CD4-positive, alpha-beta T cell (primary cell): ENCODE measurements at regions of chr17 and their contacts with region 1.

Region 1: DNA sequence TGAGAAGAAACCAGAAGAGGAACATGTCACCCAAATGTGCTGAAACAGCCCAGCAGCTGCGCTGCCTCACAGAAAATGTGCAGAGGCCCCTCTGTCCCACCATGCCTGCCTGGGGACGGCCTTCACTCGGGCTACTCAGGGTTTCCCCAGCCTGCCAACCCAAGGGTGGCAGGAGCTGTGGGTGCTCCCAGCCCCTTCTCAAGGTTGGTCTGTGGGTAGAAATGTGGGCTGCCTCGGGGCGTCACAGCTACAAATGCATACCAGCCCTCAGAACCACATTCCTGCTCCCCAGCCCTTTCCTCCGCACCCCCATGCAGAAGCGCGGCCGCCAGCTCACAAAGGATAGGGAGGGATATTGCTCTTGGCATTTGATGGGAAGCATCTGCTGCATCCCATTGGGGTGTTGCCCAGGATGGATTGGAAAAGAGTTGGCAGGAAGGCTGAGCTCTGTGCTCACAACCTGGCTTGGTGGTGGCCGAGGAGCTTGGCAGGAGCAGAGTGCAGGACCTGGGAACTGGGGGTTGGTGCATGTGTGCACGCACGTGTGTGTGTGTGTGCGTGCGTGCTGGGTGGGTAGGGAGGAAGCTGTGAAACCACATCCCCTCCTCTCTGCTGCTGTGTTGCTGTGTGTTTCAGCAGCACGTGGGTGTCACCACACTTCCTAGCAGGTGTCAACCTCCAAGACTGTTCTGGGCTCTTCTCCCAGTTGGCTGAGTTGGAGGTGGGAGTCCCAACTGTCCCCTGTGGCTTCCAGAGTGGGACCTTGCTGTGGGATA is 304.4 kb downstream of the SEC14L1 start:
- DNase-seq: peak; percentile 72 to 97 (median 83)
- ATAC-seq: peak; percentile 68
- H3K4me3 ChIP-seq: peak overlapping the region; percentile 55
- H3K4me3 Mint-ChIP-seq: peak overlapping the region; percentile 89
- H3K27ac ChIP-seq: peak overlapping the region; percentile 73 to 98
- H3K27ac Mint-ChIP-seq: peak overlapping the region; percentile 93
- H3K4me1 ChIP-seq: peaks cover 100% of the 10 kb centered on the region
- H3K4me1 Mint-ChIP-seq: peaks cover 98% of the 10 kb centered on the region
- H3K27me3 ChIP-seq: no peaks in the 10 kb centered on the region
- H3K27me3 Mint-ChIP-seq: no peaks in the 10 kb centered on the region
- CTCF ChIP-seq: no peak

Region 2: DNA sequence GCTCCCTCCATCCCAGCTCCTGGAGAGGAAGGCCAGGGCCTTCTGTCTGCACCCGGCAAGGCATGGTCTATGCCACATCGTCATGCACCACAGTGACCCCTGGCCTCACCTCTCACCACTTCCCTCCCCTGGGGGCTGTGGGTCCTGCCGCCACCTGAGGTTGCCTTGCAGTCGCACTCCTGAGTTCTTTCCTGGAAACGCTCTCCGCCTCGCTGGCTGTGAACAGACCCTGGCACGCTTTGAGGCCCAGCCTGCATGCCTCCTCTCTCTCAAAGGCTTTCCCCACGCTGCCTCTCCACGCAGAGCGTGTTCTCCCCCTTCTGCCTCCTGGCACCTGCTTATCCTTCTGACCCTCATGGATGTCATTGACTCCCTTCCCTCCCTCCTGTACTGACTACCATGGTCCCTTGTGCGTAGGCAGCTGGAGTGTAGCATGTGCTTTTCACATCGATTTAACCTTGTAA is 259.0 kb before region 1 on chr17:
- CTCF ChIA-PET with region 1: no interaction called
- POLR2A ChIA-PET with region 1: no interaction called
- intact Hi-C with region 1: no loop called
- DNase-seq: peak in 2 of 14 experiments; percentile 1 to 21
- ATAC-seq: peak; percentile 17
- H3K4me3 ChIP-seq: no peak overlapping the region
- H3K4me3 Mint-ChIP-seq: no peak overlapping the region
- H3K27ac ChIP-seq: no peak overlapping the region
- H3K27ac Mint-ChIP-seq: no peak overlapping the region
- H3K4me1 ChIP-seq: peaks cover 56% of the 10 kb centered on the region
- H3K4me1 Mint-ChIP-seq: peaks cover 29% of the 10 kb centered on the region
- H3K27me3 ChIP-seq: no peaks in the 10 kb centered on the region
- H3K27me3 Mint-ChIP-seq: no peaks in the 10 kb centered on the region
- CTCF ChIP-seq: no peak

Region 3: DNA sequence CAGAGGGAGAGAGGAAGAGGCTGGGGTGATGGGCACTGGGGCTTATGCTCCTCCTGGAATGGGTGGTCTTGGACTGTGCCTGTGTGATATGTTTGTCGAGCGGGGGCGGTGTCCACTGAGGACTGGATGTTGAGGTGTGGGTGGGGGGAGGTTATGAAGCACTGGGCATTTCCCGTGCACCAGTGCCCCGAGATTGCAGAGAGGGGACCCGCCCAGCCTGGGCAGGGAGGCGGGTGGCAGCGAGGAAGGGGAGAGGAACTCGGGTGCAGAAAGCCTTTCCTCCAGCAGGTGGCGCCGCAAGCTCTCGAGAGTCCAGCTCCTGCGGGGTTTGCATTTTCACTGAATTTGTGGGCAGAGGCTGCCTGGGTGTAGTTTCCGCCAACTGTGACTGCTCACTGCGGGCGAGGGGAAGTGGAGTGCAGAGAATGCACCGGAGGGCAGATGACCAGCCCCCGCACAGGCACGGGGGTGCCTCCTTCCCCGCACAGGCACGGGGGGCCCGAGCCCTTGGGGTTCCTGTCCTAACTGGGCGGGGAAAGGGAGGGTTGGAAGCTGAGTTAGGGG is 113.8 kb before region 1 on chr17:
- CTCF ChIA-PET with region 1: interaction called, 12 read pairs
- POLR2A ChIA-PET with region 1: interaction called, 29 read pairs
- intact Hi-C with region 1: no loop called
- DNase-seq: peak; percentile 92 to 99 (median 98)
- ATAC-seq: peak; percentile 84
- H3K4me3 ChIP-seq: peak overlapping the region; percentile 51
- H3K4me3 Mint-ChIP-seq: peak overlapping the region; percentile 90
- H3K27ac ChIP-seq: peak overlapping the region; percentile 47 to 55
- H3K27ac Mint-ChIP-seq: peak overlapping the region; percentile 88
- H3K4me1 ChIP-seq: peaks cover 52% of the 10 kb centered on the region
- H3K4me1 Mint-ChIP-seq: peaks cover 59% of the 10 kb centered on the region
- H3K27me3 ChIP-seq: no peaks in the 10 kb centered on the region
- H3K27me3 Mint-ChIP-seq: no peaks in the 10 kb centered on the region
- CTCF ChIP-seq: peak; percentile 92

Region 4: DNA sequence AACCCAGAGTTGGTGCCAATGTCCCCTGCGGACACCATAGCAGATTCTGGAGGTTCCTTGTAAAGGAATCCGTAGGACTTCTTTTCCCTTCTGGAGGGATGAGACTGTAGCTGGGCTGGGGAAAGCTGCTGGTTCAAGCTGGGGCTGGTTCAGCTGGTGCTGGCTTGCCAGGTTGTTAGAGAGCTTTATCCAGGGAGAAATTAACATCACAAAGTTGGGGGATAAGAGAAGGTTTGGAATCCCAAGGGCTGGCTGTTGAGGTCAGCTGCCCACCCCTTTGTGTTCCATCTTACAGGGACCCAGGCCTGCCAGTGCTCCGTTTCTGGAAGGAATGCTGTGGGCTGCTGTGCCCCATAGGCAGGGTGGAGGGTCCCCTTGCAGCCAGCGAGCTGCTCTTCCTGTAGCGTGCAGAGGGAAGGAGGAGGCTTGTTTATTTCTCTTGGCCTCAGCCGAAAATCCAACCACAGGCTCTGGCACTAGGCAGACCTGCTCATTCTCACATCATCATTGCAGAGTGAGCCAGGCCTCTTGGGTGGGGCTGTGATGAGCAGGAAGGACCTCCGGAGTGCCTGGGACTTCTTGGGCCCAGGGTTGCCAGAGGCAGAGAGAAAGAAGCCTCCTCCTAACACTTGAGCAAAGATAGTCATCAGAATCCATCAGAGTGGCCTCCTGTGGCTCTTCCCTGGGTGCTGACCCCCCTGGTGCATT is 53.4 kb before region 1 on chr17:
- CTCF ChIA-PET with region 1: interaction called, 3 read pairs
- POLR2A ChIA-PET with region 1: interaction called, 14 read pairs
- intact Hi-C with region 1: no loop called
- DNase-seq: peak in 10 of 14 experiments; percentile 33 to 76 (median 53)
- ATAC-seq: peak; percentile 41
- H3K4me3 ChIP-seq: peak overlapping the region; percentile 19
- H3K4me3 Mint-ChIP-seq: peak overlapping the region; percentile 65
- H3K27ac ChIP-seq: peak overlapping the region; percentile 31
- H3K27ac Mint-ChIP-seq: peak overlapping the region; percentile 90
- H3K4me1 ChIP-seq: peaks cover 91% of the 10 kb centered on the region
- H3K4me1 Mint-ChIP-seq: peaks cover 88% of the 10 kb centered on the region
- H3K27me3 ChIP-seq: no peaks in the 10 kb centered on the region
- H3K27me3 Mint-ChIP-seq: no peaks in the 10 kb centered on the region
- CTCF ChIP-seq: no peak

Region 5: DNA sequence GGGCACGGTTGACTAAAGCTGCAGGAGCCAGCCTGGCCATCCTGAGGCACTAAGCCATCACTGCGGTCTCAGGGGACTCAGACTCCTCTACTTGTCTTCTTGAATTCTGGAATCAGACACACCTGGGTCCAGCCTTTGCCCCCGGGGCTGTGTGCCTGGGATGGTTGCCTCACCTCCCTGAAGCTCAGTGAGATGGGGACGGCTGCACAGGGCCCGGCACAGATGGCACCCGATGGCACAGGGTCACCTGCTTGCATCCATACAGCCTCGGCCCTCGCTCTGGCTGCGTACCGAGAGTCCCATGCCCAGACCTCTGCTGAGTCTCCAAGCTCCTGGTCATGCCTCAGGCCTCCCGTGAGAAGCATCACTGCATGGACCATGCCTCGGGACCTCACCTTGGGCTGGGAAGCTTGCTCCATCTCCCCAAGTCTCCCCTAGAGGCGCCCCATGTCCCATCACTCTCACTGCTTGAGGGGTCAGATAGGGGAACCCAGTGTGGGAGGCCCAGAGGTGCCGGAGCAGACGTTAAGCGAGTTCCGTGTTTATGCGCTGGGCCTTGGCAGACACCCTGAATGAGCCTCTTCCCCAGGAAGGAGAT is 11.9 kb after region 1 on chr17:
- CTCF ChIA-PET with region 1: interaction called, 17 read pairs
- POLR2A ChIA-PET with region 1: interaction called, 681 read pairs
- intact Hi-C with region 1: loop called in 1 of 2 experiments (anchors 1 kb)
- DNase-seq: peak in 4 of 14 experiments; percentile 47 to 68 (median 60)
- ATAC-seq: peak; percentile 7
- H3K4me3 ChIP-seq: peak overlapping the region; percentile 94
- H3K4me3 Mint-ChIP-seq: peak overlapping the region; percentile 98
- H3K27ac ChIP-seq: peak overlapping the region; percentile 83 to 90
- H3K27ac Mint-ChIP-seq: peak overlapping the region; percentile 93
- H3K4me1 ChIP-seq: peaks cover 93% of the 10 kb centered on the region
- H3K4me1 Mint-ChIP-seq: peaks cover 72% of the 10 kb centered on the region
- H3K27me3 ChIP-seq: no peaks in the 10 kb centered on the region
- H3K27me3 Mint-ChIP-seq: no peaks in the 10 kb centered on the region
- CTCF ChIP-seq: no peak

Region 6: DNA sequence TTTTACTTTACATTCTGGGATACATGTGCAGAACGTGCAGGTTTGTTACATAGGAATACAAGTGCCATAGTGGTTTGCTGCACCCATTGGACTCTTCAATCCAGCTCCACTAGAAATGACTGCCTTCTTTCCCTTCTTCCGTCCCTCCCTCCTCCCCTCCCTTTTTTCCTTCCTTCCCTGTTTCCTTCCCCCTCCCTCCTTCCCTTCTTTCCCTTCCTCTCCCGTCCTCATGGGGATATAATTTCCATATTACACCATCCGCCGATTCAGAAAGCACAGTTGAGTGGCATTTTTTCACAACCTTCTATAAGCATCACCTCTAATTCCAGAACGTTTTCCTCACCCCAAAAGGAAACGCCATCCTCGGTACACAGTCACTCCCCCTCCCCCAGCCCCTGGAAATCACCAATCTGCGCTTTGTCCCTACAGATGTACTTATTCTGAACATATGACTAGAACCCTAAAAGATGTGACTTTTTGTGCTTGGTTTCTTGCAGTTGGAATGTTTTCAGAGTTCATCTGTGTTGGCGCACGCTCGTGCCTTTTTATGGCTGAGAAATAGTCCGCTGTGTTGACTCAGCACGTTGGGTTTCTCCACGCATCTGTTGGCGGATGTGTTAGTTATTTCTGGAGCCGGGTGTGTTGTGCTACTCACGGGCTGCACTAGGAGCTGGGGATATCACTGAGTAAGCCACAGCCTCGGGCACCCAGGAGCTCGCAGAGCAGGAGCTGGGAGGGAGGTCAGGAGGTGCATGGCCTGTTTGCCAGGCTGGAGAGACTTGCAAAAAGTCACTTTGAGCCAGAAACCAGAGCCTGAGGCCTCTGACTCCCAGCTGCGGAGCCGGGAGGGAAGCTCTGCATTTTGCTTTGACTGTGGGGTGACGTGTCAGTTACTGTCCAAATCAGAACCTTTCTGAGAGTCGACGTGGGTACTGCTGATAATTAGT is 32.0 kb after region 1 on chr17:
- CTCF ChIA-PET with region 1: interaction called, 4 read pairs
- POLR2A ChIA-PET with region 1: interaction called, 90 read pairs
- intact Hi-C with region 1: no loop called
- DNase-seq: peak in 2 of 14 experiments; percentile 47 to 48
- ATAC-seq: peak; percentile 33
- H3K4me3 ChIP-seq: no peak overlapping the region
- H3K4me3 Mint-ChIP-seq: peak overlapping the region; percentile 74
- H3K27ac ChIP-seq: peak overlapping the region; percentile 58 to 75
- H3K27ac Mint-ChIP-seq: peak overlapping the region; percentile 97
- H3K4me1 ChIP-seq: peaks cover 98% of the 10 kb centered on the region
- H3K4me1 Mint-ChIP-seq: peaks cover 79% of the 10 kb centered on the region
- H3K27me3 ChIP-seq: no peaks in the 10 kb centered on the region
- H3K27me3 Mint-ChIP-seq: no peaks in the 10 kb centered on the region
- CTCF ChIP-seq: no peak

Region 7: DNA sequence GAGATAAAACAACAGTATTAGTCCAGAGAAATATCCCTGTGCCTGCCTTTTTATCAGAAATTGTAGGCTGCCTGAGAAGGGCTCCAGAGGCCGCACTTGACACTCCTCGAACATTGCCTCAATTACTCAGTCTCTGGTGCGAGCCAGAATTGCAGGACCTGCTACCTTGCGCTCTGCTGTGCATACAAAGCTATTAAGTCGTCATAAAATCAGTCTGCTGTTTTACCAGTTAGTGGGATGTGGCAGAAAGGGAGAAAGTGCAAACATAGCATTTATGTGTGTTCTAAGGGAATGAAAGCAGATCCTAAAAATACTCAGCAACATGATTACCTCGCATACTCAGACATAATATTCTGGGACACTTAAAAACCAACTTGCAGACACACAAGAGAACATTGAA is 612.8 kb after region 1 on chr17:
- CTCF ChIA-PET with region 1: no interaction called
- POLR2A ChIA-PET with region 1: no interaction called
- intact Hi-C with region 1: no loop called
- DNase-seq: no peak
- ATAC-seq: no peak
- H3K4me3 ChIP-seq: no peak overlapping the region
- H3K4me3 Mint-ChIP-seq: no peak overlapping the region
- H3K27ac ChIP-seq: no peak overlapping the region
- H3K27ac Mint-ChIP-seq: peak overlapping the region; percentile 48
- H3K4me1 ChIP-seq: no peaks in the 10 kb centered on the region
- H3K4me1 Mint-ChIP-seq: peaks cover 40% of the 10 kb centered on the region
- H3K27me3 ChIP-seq: no peaks in the 10 kb centered on the region
- H3K27me3 Mint-ChIP-seq: no peaks in the 10 kb centered on the region
- CTCF ChIP-seq: no peak

Region 8: DNA sequence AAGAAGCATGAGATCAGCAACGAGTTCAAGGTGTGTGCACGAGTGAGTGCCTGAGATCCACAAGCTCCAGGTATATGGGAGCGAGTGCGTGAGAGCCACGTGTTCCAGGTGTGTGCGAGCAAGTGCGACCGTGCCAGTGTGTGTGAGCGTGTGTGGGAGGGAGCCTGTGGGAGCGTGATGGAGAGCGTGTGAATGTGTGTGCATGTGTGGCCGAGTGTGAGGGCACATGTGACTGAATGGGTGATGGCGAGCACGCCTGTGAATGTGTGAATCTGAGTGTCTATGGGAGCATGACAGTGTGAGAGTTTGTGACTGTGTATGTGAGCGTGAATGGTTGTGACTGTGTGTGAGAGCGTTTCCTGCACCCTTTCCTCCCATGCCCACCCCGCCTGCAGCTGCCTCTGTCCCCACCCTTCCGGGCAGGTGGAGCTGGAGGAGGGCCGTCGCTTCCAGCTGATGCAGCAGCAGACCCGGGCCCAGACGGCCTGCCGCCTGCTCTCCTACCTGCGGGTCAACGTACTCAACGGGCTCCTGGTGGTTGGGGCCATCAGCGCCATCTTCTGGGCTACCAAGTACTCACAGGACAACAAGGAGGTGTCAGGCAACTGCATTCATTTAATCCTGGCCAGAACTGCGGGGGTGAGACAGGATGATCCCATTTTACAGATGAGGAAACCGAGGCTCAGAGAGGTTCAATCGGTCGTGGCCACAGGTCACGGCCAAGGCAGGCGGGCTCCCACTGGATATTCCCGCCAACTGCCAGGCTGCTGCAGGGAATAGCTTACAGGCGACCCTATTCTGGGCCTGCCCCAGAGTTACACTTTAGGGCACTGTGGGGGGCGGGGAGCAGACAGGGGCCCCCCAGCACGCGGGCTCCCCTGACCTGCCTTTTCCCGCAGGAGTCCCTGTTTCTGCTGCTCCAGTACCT is 689.1 kb after region 1 on chr17:
- CTCF ChIA-PET with region 1: no interaction called
- POLR2A ChIA-PET with region 1: interaction called, 15 read pairs
- intact Hi-C with region 1: loop called in 1 of 2 experiments (anchors 10 kb)
- DNase-seq: peak; percentile 71 to 93 (median 78)
- ATAC-seq: peak; percentile 34
- H3K4me3 ChIP-seq: peak overlapping the region; percentile 94
- H3K4me3 Mint-ChIP-seq: peak overlapping the region; percentile 88
- H3K27ac ChIP-seq: peak overlapping the region; percentile 7 to 92
- H3K27ac Mint-ChIP-seq: peak overlapping the region; percentile 81
- H3K4me1 ChIP-seq: peaks cover 90% of the 10 kb centered on the region
- H3K4me1 Mint-ChIP-seq: peaks cover 80% of the 10 kb centered on the region
- H3K27me3 ChIP-seq: no peaks in the 10 kb centered on the region
- H3K27me3 Mint-ChIP-seq: no peaks in the 10 kb centered on the region
- CTCF ChIP-seq: peak; percentile 75